Endothelial cell of umbilical vein (primary cell): ENCODE measurements at regions of chr6 and their contacts with region 1.

Region 1: DNA sequence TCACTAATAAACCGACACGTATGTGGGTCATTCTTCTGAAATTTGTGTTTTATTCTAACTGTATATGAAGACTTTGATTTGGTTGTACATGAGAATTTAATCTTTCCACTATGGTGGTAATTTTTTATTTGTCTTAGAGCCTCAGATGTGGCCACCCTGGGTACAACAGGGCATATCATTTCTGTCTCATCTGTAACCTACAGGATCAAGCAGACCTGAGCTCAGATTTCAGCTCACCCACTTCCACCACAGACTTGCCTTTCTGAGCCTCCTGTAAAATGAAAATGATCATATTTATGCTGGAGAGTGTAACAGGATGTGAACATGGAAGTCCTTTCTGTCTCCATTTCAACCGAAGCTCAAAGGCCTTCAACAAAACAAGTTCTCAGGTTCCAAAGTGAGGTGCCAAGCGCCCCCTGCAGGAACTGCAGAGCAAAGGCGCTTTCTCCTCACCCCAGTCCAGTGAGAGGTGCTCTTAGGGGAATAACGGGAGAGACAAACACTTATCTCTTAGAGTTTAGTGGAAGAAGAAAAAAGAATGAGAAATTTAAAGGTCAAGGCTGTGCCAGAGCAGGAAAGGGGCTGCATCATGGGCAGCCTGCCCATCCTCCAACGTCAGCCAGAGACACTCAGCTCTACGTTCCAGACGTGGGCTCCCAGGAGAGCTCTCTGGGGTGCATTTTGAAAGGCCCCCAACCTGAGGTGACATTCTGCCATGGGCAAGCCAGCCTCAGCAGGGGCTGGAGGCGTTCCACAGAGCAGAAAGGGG is 23.0 kb upstream of the CD24 start:
- DNase-seq: peak; percentile 47
- H3K4me3 ChIP-seq: no peak overlapping the region
- H3K27ac ChIP-seq: no peak overlapping the region
- H3K4me1 ChIP-seq: no peaks in the 10 kb centered on the region
- H3K27me3 ChIP-seq: no peaks in the 10 kb centered on the region
- CTCF ChIP-seq: peak; percentile 85 to 88
- POLR2A ChIP-seq: no peak

Region 2: DNA sequence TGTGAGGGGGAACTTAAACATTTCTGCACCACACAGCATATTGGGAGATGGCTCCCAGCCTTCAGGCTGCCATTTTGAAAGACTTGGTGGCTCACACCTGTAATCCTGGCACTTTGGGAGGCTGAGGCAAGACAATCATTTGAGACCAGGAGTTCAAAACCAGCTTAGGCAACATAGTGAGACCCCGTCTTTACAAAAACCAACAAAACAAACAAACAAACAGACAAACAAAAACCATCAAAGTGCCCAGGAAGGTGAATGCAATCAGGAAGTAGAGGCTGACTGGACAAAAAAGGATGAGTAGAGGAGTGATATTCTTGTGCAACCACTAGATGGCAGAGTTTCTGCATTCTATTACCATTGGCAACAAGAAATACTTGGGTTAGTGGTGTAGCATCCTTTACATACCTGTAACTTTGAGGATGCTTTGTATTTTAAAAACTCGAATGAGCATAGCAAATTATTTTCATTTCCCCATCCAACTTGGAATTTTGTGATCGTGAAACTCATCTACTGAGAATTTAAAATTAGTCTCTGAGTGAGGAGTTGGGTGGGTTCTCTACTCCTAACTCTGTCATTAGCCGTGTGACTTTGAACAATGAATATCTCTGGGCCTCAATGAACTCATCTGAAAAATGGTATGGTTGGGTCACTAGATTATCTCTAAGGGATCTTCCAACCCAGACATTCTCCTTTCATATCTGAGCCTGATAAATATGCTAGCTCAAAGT is 552.6 kb before region 1 on chr6:
- CTCF ChIA-PET with region 1: interaction called, 15 read pairs
- POLR2A ChIA-PET with region 1: no interaction called
- dilution Hi-C with region 1: no loop called
- intact Hi-C with region 1: loop called (anchors 1 kb)
- DNase-seq: peak; percentile 52
- H3K4me3 ChIP-seq: no peak overlapping the region
- H3K27ac ChIP-seq: no peak overlapping the region
- H3K4me1 ChIP-seq: no peaks in the 10 kb centered on the region
- H3K27me3 ChIP-seq: peaks cover 14 to 29% of the 10 kb centered on the region in 2 experiments
- CTCF ChIP-seq: peak; percentile 61 to 68
- POLR2A ChIP-seq: no peak

Region 3: GRCh38 chr6:106979427-106979884 is 18.1 kb before region 1 on chr6:
- CTCF ChIA-PET with region 1: interaction called, 18 read pairs
- POLR2A ChIA-PET with region 1: no interaction called
- dilution Hi-C with region 1: no loop called
- intact Hi-C with region 1: no loop called
- DNase-seq: peak; percentile 78
- H3K4me3 ChIP-seq: no peak overlapping the region
- H3K27ac ChIP-seq: no peak overlapping the region
- H3K4me1 ChIP-seq: no peaks in the 10 kb centered on the region
- H3K27me3 ChIP-seq: peaks cover 11 to 23% of the 10 kb centered on the region in 2 experiments
- CTCF ChIP-seq: peak; percentile 93 to 94
- POLR2A ChIP-seq: no peak

Region 4: DNA sequence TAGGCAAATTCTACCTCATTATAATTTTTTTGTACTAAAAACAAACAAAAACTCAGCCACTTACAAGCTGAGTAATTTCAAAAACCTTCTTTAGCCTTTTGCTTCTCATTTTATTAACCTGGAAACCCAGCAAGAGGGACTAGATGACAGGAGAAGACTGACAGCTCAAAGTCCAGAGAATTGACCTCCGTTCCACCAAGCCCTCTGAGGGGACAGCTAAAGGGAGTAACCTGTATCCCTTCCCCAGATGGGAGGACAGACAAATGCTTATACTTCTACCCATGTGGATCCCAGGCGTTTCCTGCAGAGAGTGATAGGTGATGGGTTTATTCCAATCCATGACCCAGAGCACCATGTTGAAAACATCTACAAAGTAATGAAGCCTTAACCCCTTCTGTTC is 11.9 kb after region 1 on chr6:
- CTCF ChIA-PET with region 1: interaction called, 15 read pairs
- POLR2A ChIA-PET with region 1: no interaction called
- dilution Hi-C with region 1: no loop called
- intact Hi-C with region 1: no loop called
- DNase-seq: no peak
- H3K4me3 ChIP-seq: no peak overlapping the region
- H3K27ac ChIP-seq: no peak overlapping the region
- H3K4me1 ChIP-seq: no peaks in the 10 kb centered on the region
- H3K27me3 ChIP-seq: no peaks in the 10 kb centered on the region
- CTCF ChIP-seq: no peak
- POLR2A ChIP-seq: no peak

Region 5: GRCh38 chr6:107021446-107022185 is 24.0 kb after region 1 on chr6:
- CTCF ChIA-PET with region 1: interaction called, 10 read pairs
- POLR2A ChIA-PET with region 1: no interaction called
- dilution Hi-C with region 1: no loop called
- intact Hi-C with region 1: no loop called
- DNase-seq: peak; percentile 8
- H3K4me3 ChIP-seq: no peak overlapping the region
- H3K27ac ChIP-seq: no peak overlapping the region
- H3K4me1 ChIP-seq: peaks cover 8% of the 10 kb centered on the region
- H3K27me3 ChIP-seq: no peaks in the 10 kb centered on the region
- CTCF ChIP-seq: no peak
- POLR2A ChIP-seq: no peak